ENCODE measurements at regions of chr20 and their contacts with region 1.

Region 1: GRCh38 chr20:47814169-47814921 is 29.1 kb upstream of the SULF2 start:
- DNase-seq: no peak
- H3K4me3 ChIP-seq: no peak overlapping the region
- H3K27ac ChIP-seq: no peak overlapping the region
- H3K4me1 ChIP-seq: peaks cover 44% of the 10 kb centered on the region
- H3K27me3 ChIP-seq: no peaks in the 10 kb centered on the region
- CTCF ChIP-seq: peak; percentile 2 to 25

Region 2: DNA sequence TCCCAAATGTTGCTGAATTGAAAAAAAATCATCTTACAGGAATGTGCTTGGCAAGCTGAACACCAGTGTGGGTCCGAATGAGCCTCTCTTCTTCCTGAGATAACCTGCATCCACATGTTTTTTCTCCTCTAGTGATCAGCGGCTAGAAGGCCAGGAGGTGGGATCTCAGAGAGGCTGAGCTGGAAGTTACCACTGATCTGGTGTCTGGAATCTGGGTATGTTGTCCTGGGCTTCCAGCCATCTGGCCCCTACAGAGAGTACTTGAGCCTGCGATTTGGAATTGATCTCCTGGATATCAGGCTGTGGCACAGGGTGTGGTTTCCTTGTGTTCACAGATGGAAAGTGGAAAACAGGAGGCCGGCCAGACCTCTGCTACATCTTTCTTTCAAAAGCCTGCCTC is 65.0 kb before region 1 on chr20:
- CTCF ChIA-PET with region 1: no interaction called
- dilution Hi-C with region 1: no loop called
- in situ Hi-C with region 1: no loop called
- intact Hi-C with region 1: no loop called
- DNase-seq: no peak
- H3K4me3 ChIP-seq: no peak overlapping the region
- H3K27ac ChIP-seq: no peak overlapping the region
- H3K4me1 ChIP-seq: no peaks in the 10 kb centered on the region
- H3K27me3 ChIP-seq: no peaks in the 10 kb centered on the region
- CTCF ChIP-seq: no peak

Region 3: GRCh38 chr20:47847868-47848531 is 33.7 kb after region 1 on chr20:
- CTCF ChIA-PET with region 1: no interaction called
- dilution Hi-C with region 1: no loop called
- in situ Hi-C with region 1: no loop called
- intact Hi-C with region 1: loop called (anchors 2 kb)
- DNase-seq: no peak
- H3K4me3 ChIP-seq: no peak overlapping the region
- H3K27ac ChIP-seq: no peak overlapping the region
- H3K4me1 ChIP-seq: peaks cover 37% of the 10 kb centered on the region
- H3K27me3 ChIP-seq: no peaks in the 10 kb centered on the region
- CTCF ChIP-seq: no peak